Activated T-helper 1 cell treated with anti-CD3 and anti-CD28 coated beads, Interleukin-12 subunit alpha, Interleukin-12 subunit beta, Interleukin-2, Interleukin-4 antibody, amounts not matched to agents 30 ng/mL and 10 ng/mL and 1 ng/mL, durations not matched to agents 14 hours and 24 hours and 36 hours (primary cell): ENCODE measurements at regions of chr9 and their contacts with region 1.

Region 1: DNA sequence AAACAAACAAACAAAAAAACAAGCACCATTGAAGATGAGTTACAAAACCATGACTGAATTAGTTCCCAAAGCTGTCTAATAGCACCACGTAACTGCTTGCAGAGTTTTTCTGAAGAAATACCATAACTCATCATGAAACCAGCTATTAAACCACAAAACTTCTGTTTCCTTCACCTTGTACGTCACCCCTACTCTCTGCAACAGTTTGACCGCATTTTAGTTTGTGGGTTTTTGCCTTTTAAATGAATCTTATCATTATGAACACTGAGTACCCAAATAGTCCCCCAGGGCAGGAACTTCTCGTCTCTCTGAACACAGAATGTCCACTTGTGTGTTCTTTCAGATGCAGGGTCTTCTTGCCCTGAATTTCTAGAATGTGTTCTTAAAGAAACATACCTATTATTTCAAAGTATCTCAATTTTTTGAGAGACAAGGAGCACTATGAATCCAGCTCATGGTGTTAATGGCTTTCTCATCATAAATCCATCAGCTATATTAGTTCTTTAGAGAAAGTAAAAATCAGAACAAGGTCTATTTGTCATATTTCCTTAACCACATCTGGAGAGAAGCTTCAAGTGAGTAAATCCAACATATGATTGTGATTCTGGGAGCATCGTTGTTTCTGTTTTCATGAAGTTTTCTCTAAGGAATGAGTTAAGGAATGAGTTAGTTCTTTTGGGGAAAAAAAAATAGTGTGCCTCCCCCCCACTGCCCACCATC is 210.6 kb downstream of the AUH start:
- DNase-seq: peak; percentile 70
- H3K4me3 Mint-ChIP-seq: peak overlapping the region; percentile 13
- H3K27ac Mint-ChIP-seq: peak overlapping the region; percentile 94
- H3K4me1 Mint-ChIP-seq: peaks cover 95% of the 10 kb centered on the region
- H3K27me3 Mint-ChIP-seq: no peaks in the 10 kb centered on the region

Region 2: DNA sequence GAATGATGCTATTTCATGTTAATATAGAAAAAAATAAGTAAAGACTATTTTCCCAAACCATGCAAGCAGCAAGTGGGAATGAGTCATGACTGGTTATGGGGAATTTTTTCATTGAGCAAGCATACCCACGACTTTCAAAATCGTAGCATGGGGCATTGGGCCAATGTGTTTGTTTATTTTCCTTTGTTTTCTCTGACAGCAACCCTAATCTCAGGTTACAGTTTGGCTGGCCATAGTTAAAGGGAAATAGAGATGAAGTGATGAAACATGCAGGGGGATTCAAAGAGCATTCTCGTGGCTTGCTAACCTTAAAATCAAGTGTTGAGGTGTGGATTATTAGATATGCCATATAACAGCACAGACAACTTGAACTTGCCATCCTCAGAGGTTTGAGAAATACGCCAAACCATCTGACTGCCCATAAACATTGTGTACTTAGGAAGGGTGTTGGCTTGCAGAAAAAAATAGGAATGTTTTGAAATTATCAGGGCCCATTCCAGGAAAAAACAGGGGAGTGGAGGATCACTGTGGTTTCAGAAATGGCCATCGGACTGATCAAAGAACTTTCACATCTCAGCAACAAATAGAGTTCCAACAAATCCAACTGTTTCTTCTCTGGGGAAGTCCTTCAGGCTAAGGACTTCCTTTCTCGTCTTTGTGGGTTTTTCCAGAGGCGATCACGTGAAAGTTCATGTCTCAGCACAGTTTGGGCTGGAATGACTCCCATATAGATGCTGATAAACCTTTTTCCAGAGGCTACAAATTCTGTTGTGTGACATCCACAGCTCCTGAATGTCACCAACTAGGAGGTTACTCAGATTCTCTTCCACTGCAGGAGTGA is 90.4 kb before region 1 on chr9:
- intact Hi-C with region 1: loop called (anchors 2 kb)
- DNase-seq: no peak
- H3K4me3 Mint-ChIP-seq: peak overlapping the region; percentile 6
- H3K27ac Mint-ChIP-seq: peak overlapping the region; percentile 70
- H3K4me1 Mint-ChIP-seq: peaks cover 40% of the 10 kb centered on the region
- H3K27me3 Mint-ChIP-seq: peaks cover 2% of the 10 kb centered on the region

Region 3: DNA sequence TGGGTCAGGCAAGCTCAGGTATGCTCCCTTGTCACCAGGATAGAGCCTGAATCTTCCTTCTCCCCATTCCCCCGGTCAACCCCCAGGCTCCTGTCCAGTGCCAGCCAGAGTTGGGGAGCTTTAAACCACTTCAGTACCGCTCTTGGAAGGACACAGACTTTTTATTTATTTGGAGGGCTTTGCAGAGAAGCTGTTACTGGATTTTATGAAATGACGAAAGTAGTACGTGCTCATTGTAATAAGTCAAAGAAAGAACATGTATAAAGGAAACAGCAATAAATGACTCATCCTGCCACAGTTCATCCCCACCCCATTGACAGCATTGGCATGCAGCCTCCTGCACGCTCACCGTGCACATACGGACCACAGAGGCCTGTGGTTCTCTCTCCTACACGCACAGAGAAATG is 19.7 kb before region 1 on chr9:
- intact Hi-C with region 1: loop called (anchors 1 kb)
- DNase-seq: peak; percentile 70
- H3K4me3 Mint-ChIP-seq: peak overlapping the region; percentile 63
- H3K27ac Mint-ChIP-seq: peak overlapping the region; percentile 96
- H3K4me1 Mint-ChIP-seq: peaks cover 42% of the 10 kb centered on the region
- H3K27me3 Mint-ChIP-seq: no peaks in the 10 kb centered on the region

Region 4: GRCh38 chr9:91207729-91208418 is 56.7 kb after region 1 on chr9:
- intact Hi-C with region 1: loop called (anchors 1 kb)
- DNase-seq: no peak
- H3K4me3 Mint-ChIP-seq: peak overlapping the region; percentile 68
- H3K27ac Mint-ChIP-seq: peak overlapping the region; percentile 95
- H3K4me1 Mint-ChIP-seq: peaks cover 59% of the 10 kb centered on the region
- H3K27me3 Mint-ChIP-seq: no peaks in the 10 kb centered on the region

Region 5: GRCh38 chr9:91361291-91362050 is 210.3 kb after region 1 on chr9 and contains the start of gene AUH:
- intact Hi-C with region 1: loop called (anchors 1 kb)
- DNase-seq: peak; percentile 85
- H3K4me3 Mint-ChIP-seq: peak within 1 kb of the TSS; percentile 97
- H3K27ac Mint-ChIP-seq: peak within 1 kb of the TSS; percentile 94
- H3K4me1 Mint-ChIP-seq: peaks cover 48% of the 10 kb centered on the region
- H3K27me3 Mint-ChIP-seq: no peaks in the 10 kb centered on the region
- total RNA-seq, gene AUH: 50.4 and 53.3 TPM in 2 replicates

Region 6: GRCh38 chr9:91711755-91712601 is 560.8 kb after region 1 on chr9:
- intact Hi-C with region 1: loop called (anchors 1 kb)
- DNase-seq: peak; percentile 67
- H3K4me3 Mint-ChIP-seq: no peak overlapping the region
- H3K27ac Mint-ChIP-seq: no peak overlapping the region
- H3K4me1 Mint-ChIP-seq: no peaks in the 10 kb centered on the region
- H3K27me3 Mint-ChIP-seq: peaks cover 9% of the 10 kb centered on the region